Heart left ventricle (tissue), 16 donors: ENCODE measurements at regions of chr11 and their contacts with region 1.

Region 1: GRCh38 chr11:66510271-66510989 is at the start of gene BBS1:
- DNase-seq: peak; percentile 88 to 92 (median 90)
- ATAC-seq: peak; percentile 93 to 98 (median 97)
- H3K4me3 ChIP-seq: peak within 1 kb of the TSS; percentile 55 to 97 (median 84)
- H3K27ac ChIP-seq: peak within 1 kb of the TSS in 11 of 12 donors; percentile 10 to 72 (median 63)
- H3K4me1 ChIP-seq: peaks cover 0 to 18% (median 12%) of the 10 kb centered on the region in 12 donors
- H3K27me3 ChIP-seq: no peaks in the 10 kb centered on the region
- CTCF ChIP-seq: peak in 1 of 12 donors; percentile 19
- POLR2A ChIP-seq: peak in 1 of 2 donors; percentile 40
- total RNA-seq, gene BBS1: 15.8 to 51.8 (median 18.7) TPM

Region 2: GRCh38 chr11:66242095-66242765 is 268.2 kb before region 1 on chr11:
- intact Hi-C with region 1: no loop called
- DNase-seq: peak in 1 of 5 donors; percentile 57
- ATAC-seq: peak in 2 of 4 donors; percentile 16 to 19
- H3K4me3 ChIP-seq: no peak overlapping the region
- H3K27ac ChIP-seq: no peak overlapping the region
- H3K4me1 ChIP-seq: peaks cover 0 to 10% (median 3%) of the 10 kb centered on the region in 12 donors
- H3K27me3 ChIP-seq: no peaks in the 10 kb centered on the region
- CTCF ChIP-seq: no peak
- POLR2A ChIP-seq: no peak

Region 3: DNA sequence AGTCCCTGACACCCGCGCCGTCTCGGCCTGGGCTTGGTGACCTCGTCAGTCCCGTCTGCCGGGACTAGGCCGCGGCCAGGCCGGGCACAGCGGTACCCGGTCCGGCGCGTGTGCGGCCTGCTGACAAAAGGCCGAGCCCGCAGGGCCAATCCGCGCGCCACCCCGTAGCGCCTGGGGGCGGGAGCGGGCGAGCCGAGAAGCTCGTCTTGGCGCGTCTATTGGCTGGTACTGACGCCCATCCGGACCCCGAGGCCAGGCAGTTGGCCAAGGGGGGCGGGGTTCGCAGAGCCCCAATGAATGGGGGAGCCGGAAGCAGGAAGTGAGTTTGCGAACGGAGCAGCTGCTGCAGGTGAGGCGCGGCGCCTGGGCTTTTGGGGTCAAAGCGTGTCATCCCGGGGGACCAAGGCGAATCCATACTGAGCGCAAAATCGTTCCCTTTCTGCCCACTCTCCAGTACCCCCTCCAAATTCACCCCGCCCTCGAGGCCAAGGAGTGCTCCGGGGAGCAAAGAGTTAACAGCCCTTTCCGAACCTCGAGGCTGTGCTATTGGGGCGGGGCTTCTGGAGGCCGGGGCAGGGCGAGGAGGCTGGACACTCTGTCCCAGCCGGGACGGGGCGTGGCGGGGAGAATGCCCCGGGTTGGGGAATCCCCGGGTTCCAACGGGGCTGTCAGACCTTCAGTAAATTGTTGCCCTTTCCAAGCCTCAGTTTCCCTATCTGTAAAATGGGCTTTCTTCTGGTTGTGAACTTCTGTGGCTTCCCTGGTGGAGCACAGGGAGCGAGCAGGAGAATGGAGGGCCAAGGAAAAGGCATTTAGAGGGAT is 30.1 kb before region 1 on chr11 and contains the start of gene DPP3:
- intact Hi-C with region 1: loop called in 1 of 10 experiments (anchors 2 kb)
- DNase-seq: peak; percentile 98 to 99 (median 98)
- ATAC-seq: peak; percentile 96 to 98 (median 96)
- H3K4me3 ChIP-seq: peak within 1 kb of the TSS; percentile 58 to 93 (median 76)
- H3K27ac ChIP-seq: peak within 1 kb of the TSS; percentile 64 to 94 (median 88)
- H3K4me1 ChIP-seq: peaks cover 0 to 19% (median 10%) of the 10 kb centered on the region in 12 donors
- H3K27me3 ChIP-seq: no peaks in the 10 kb centered on the region
- CTCF ChIP-seq: peak in 1 of 12 donors; percentile 3
- POLR2A ChIP-seq: peak in 1 of 2 donors; percentile 91
- total RNA-seq, gene DPP3: 6.2 to 43.1 (median 14.9) TPM

Region 4: DNA sequence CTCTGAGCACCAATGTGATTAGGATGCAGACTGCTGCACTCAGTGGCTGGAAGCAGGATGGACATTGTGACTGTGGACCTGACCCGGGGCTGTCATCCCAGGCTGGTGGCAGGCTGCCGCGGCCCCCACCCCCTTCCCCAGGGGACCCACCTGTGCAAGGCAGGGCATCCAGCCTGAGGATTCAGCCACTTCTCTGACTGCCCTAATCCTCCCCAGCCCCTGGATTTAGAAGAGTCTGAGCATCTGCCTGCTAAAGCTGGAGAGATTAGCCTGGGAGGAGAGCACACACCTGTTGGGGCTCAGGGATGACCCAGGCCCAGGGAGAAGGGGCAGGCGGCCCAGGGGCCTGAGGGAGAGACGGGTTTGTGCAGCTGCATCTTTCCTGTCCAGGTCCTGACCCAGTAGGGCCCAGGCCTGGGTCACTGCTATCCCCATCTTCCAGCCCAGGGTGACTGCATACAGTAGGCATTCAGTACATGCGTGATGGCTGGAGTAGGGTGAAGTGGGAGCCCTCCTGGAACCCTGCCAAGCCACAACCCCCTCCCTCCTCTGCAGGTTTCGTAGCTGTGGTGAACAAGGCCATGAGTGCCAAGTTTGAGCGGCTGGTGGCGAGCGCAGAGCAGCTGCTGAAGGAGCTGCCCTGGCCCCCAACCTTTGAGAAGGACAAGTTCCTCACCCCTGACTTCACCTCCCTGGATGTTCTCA is 18.1 kb before region 1 on chr11:
- intact Hi-C with region 1: loop called in 1 of 10 experiments (anchors 2 kb)
- DNase-seq: peak in 1 of 5 donors; percentile 25
- ATAC-seq: no peak
- H3K4me3 ChIP-seq: no peak overlapping the region
- H3K27ac ChIP-seq: no peak overlapping the region
- H3K4me1 ChIP-seq: no peaks in the 10 kb centered on the region
- H3K27me3 ChIP-seq: no peaks in the 10 kb centered on the region
- CTCF ChIP-seq: no peak
- POLR2A ChIP-seq: no peak